ENCODE measurements at regions of chr1 and their contacts with region 1.

Region 1: DNA sequence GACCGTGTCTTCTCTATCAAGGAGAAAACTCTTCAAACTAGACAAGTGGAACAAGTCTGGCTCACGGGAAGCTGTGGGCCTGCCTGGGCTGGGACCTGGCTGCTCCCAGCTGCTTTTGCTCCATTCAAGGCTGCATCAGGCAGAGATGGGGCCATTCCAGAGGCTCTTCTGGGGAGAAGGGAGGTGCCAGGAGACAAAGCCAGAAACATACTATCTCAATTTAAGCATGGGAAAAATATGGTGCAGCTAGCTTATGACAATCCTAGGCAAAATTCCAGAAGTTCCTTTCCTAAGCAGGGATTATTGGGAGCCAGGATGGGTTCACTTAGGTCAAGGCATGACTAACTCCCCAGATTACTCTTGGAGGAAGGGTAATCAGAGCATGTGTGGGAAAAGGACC is 90.8 kb upstream of the SLC2A1 start:
- DNase-seq: no peak
- ATAC-seq: no peak
- H3K4me3 ChIP-seq: no peak overlapping the region
- H3K27ac ChIP-seq: no peak overlapping the region
- H3K4me1 ChIP-seq: no peaks in the 10 kb centered on the region
- H3K27me3 ChIP-seq: no peaks in the 10 kb centered on the region
- CTCF ChIP-seq: no peak

Region 2: GRCh38 chr1:42368096-42368795 is 681.2 kb before region 1 on chr1:
- CTCF ChIA-PET with region 1: no interaction called
- POLR2A ChIA-PET with region 1: interaction called, 14 read pairs
- in situ Hi-C with region 1: no loop called
- intact Hi-C with region 1: no loop called
- DNase-seq: no peak
- ATAC-seq: no peak
- H3K4me3 ChIP-seq: no peak overlapping the region
- H3K27ac ChIP-seq: no peak overlapping the region
- H3K4me1 ChIP-seq: no peaks in the 10 kb centered on the region
- H3K27me3 ChIP-seq: no peaks in the 10 kb centered on the region
- CTCF ChIP-seq: no peak

Region 3: GRCh38 chr1:42723501-42723900 is 326.0 kb before region 1 on chr1:
- CTCF ChIA-PET with region 1: no interaction called
- POLR2A ChIA-PET with region 1: no interaction called
- in situ Hi-C with region 1: no loop called
- intact Hi-C with region 1: no loop called
- DNase-seq: no peak
- ATAC-seq: no peak
- H3K4me3 ChIP-seq: no peak overlapping the region
- H3K27ac ChIP-seq: no peak overlapping the region
- H3K4me1 ChIP-seq: no peaks in the 10 kb centered on the region
- H3K27me3 ChIP-seq: no peaks in the 10 kb centered on the region
- CTCF ChIP-seq: no peak

Measured in Panc1 (cell line).